Activated CD4-positive, alpha-beta T cell treated with anti-CD3 and anti-CD28 coated beads, Interleukin-2, amount 10 ng/mL, durations not matched to agents 7 days and 5 days (primary cell): ENCODE measurements at regions of chr17 and their contacts with region 1.

Region 1: DNA sequence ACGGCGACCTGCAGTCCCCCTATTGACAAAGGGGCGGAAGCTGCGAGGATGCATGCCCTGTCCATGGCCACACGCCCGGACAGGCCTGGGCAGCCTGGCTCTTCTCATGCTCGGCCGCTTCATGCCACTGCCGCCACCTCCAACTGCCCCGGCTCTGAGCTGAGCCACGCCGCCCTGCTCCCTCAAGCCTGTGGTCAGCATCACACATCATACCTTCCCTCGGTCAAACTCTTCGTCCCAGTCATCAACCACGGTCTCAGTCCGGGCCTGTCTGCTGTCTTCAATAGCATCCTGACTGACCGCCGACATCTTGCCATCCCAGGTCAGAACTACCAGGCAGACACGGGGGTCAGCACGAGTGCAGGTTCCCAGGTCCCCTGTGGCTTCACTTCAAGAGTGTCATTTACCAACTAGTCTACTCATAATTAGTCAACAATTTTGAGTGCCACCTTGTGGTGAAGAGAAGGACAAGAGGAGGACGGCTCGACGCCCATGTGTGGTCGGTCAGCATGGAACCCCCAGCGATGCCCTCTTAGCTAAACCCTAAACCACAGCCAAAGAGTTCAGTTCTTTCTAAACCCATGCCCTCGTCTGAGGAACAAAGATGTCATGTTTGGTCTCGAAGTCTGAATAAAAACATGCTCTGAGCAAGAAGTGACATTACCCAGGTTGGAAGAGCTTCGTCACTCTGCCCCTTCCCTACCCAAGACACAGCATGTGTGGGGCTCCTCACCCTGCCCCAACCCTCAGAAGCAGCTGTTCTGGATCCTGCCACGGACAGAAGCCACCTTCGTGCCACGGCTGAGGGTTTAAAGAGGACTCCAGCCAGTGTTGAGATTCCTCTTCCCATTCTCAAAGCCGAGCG is 16.9 kb upstream of the CYTH1 start:
- DNase-seq: no peak
- H3K4me3 Mint-ChIP-seq: no peak overlapping the region
- H3K27ac Mint-ChIP-seq: peak overlapping the region; percentile 79
- H3K4me1 Mint-ChIP-seq: peaks cover 66% of the 10 kb centered on the region
- H3K27me3 Mint-ChIP-seq: no peaks in the 10 kb centered on the region

Region 2: GRCh38 chr17:78785011-78785662 is 13.8 kb before region 1 on chr17:
- CTCF ChIA-PET with region 1: interaction called, 10 read pairs
- POLR2A ChIA-PET with region 1: no interaction called
- DNase-seq: peak; percentile 42
- H3K4me3 Mint-ChIP-seq: peak overlapping the region; percentile 33
- H3K27ac Mint-ChIP-seq: peak overlapping the region; percentile 69
- H3K4me1 Mint-ChIP-seq: peaks cover 61% of the 10 kb centered on the region
- H3K27me3 Mint-ChIP-seq: no peaks in the 10 kb centered on the region

Region 3: GRCh38 chr17:78812855-78813254 is 13.9 kb after region 1 on chr17:
- CTCF ChIA-PET with region 1: no interaction called
- POLR2A ChIA-PET with region 1: no interaction called
- DNase-seq: no peak
- H3K4me3 Mint-ChIP-seq: no peak overlapping the region
- H3K27ac Mint-ChIP-seq: no peak overlapping the region
- H3K4me1 Mint-ChIP-seq: peaks cover 33% of the 10 kb centered on the region
- H3K27me3 Mint-ChIP-seq: no peaks in the 10 kb centered on the region

Region 4: GRCh38 chr17:78840725-78841611 is 42.0 kb after region 1 on chr17 and contains the start of gene USP36:
- CTCF ChIA-PET with region 1: no interaction called
- POLR2A ChIA-PET with region 1: no interaction called
- DNase-seq: peak; percentile 100
- H3K4me3 Mint-ChIP-seq: peak within 1 kb of the TSS; percentile 87
- H3K27ac Mint-ChIP-seq: peak within 1 kb of the TSS; percentile 98
- H3K4me1 Mint-ChIP-seq: peaks cover 52% of the 10 kb centered on the region
- H3K27me3 Mint-ChIP-seq: no peaks in the 10 kb centered on the region
- total RNA-seq, gene USP36: 79.0 to 92.9 TPM

Region 5: DNA sequence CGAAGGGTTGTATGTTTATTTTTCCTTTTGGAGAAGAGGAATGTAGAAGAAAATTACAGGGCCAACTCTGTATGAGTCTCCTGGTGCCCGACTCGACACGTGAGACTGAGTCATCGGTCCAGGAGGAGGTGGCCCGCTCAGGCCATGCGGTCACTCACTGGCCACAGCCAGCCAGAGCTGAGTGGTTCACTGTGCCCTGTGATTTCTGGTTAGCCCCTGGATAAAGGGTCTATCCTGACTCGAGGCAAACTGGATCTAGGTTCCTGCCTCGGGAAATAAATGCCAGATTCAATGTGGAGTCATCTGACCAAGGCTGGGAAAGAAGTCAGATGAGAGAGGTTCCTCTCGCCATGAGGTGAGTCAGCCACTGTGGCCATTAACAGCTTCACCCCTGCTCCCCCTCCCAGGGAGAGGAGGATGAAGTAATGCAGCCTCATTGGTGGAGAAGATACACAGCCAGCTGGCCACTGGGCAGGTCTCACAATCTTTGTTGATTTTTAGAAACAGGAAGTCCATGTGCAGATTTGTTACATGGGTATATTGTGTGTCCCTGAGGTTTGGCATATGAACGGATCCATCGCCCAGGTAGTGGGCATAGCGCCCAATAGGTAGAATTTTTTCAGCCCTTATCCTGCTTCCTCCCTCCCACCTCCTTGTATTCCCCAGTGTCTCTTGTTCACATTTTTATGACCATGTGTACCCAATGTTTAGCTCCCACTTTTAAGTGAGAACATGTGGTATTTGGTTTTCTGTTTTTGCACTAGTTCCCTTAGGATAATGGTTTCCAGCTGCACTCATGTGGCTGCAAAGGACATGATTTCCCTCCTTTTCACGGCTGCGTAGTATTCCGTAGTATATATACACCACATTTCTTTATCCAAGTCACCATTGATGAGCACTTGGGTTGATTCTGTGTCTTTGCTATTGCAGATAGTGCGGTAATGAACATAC is 63.4 kb after region 1 on chr17:
- CTCF ChIA-PET with region 1: no interaction called
- POLR2A ChIA-PET with region 1: no interaction called
- DNase-seq: no peak
- H3K4me3 Mint-ChIP-seq: no peak overlapping the region
- H3K27ac Mint-ChIP-seq: no peak overlapping the region
- H3K4me1 Mint-ChIP-seq: peaks cover 4% of the 10 kb centered on the region
- H3K27me3 Mint-ChIP-seq: peaks cover 2% of the 10 kb centered on the region